Posterior cingulate gyrus (tissue), 11 donors: ENCODE measurements at regions of chr21 and their contacts with region 1.

Region 1: DNA sequence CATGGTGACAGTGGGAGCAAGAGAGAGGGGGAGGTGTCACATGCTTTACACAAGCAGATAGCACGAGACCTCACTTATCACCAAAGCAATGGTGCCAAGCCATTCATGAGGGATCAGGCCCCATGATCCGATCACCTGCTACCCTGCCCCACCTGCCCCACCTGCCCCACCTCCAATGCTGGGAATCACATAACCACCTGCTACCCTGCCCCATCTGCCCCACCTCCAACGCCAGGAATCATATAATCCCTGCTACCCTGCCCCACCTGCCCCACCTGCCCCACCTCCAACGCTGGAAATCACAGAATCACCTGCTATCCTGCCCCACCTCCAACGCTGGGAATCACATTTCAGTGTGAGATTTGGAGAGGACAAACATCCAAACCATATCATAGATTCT is 10.6 kb upstream of the AIRE start:
- DNase-seq: no peak

Region 2: DNA sequence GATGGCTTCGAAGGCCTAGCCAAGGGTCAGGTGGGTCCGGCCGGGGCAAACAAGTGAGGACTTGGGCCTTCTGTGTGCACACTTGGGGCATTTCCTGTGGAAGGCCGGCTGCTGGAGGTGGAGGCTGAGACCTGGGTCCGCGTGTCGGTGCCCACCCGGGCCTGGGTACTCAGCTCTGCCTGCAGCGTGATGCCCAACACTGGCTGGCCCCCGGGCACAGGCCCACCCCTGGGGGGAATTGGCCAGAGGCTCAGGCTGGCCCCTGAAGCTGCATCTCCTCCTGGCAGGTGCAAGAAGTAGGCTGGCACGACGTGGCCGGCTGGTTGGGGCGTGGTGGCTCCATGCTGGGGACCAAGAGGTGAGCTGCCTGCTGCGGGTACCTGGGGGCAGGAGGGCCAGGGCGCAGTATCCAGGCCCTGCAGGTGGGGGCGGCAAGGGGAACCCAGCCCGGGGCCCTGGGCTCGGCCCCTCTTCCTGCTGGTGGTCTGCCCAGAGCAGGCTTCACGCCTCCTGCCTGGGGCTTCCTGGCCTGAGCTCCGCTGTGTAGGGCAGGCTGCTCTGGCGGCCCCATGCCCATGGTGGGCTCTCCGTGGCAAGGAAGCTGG is 46.9 kb after region 1 on chr21:
- intact Hi-C with region 1: loop called (anchors 2 kb)
- DNase-seq: no peak

Region 3: DNA sequence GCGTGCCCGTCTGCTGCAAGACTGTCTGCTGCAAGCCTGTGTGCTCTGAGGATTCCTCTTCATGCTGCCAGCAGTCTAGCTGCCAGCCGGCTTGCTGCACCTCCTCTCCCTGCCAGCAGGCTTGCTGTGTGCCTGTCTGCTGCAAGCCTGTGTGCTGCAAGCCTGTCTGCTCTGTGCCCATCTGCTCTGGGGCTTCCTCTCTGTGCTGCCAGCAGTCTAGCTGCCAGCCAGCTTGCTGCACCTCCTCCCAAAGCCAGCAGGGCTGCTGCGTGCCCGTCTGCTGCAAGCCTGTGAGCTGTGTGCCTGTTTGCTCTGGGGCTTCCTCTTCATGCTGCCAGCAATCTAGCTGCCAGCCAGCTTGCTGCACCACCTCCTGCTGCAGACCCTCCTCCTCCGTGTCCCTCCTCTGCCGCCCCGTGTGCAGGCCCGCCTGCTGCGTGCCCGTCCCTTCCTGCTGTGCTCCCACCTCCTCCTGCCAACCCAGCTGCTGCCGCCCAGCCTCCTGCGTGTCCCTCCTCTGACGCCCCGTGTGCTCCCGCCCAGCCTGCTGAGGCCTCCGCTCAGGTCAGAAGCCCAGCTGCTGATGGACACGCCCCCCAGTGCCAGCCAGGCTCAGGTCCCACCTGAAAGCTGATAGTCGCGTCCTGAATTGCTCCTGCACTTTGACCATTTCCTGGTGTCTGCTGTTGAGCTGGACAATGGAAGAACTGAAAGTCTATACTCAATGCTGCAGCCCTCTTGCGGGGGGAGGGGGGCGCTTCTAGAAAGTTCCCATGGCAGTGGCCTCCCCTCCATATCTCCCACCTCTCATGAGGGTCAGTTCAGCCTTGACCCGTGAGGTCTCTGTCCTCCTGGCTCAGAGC is 299.6 kb after region 1 on chr21:
- intact Hi-C with region 1: no loop called
- DNase-seq: peak in 2 of 10 donors; percentile 57 to 74